Panc1 (cell line): ENCODE measurements at regions of chr7 and their contacts with region 1.

Region 1: GRCh38 chr7:130733931-130734814 is at the start of gene KLF14:
- DNase-seq: no peak
- ATAC-seq: peak; percentile 85
- H3K4me3 ChIP-seq: peak within 1 kb of the TSS; percentile 56 to 63
- H3K27ac ChIP-seq: no peak within 1 kb of the TSS
- H3K4me1 ChIP-seq: peaks cover 3% of the 10 kb centered on the region; the same call in 1 of the 2 replicates
- H3K27me3 ChIP-seq: peaks cover 41% of the 10 kb centered on the region
- CTCF ChIP-seq: peak; percentile 42
- total RNA-seq, gene KLF14: 0.39 TPM

Region 2: DNA sequence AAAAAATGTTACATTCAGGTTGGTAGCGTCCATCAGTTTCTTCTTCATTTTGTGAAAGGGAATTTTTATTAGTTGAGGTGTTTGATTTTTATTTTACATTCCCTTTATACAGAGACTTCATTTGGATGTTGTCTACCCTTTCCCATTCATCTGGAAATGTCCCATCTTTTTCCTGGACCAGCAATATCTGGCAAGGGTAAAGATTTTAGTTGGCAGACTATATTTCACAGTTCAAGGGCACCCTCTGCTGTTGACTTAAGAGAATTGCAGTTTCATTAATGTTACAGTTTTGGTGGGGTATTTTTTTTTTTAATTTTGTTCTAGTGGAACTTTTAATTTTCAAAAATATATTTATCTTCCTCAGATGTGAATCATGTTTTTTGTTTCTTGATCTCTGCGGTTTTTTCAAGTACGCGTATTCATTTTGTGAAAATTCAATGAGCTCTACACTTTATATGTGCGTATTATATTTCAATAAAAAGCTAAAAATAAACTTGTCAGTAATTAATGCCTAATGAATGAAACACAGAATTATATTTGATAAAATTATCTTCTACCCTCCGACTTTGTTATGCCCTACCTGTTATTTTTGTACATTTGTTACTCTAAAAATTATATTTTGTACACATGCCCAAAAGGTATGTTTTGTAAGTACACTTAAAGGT is 97.8 kb after region 1 on chr7:
- CTCF ChIA-PET with region 1: no interaction called
- POLR2A ChIA-PET with region 1: no interaction called
- in situ Hi-C with region 1: no loop called
- intact Hi-C with region 1: loop called (anchors 10 kb)
- DNase-seq: no peak
- ATAC-seq: no peak
- H3K4me3 ChIP-seq: no peak overlapping the region
- H3K27ac ChIP-seq: no peak overlapping the region
- H3K4me1 ChIP-seq: no peaks in the 10 kb centered on the region
- H3K27me3 ChIP-seq: no peaks in the 10 kb centered on the region
- CTCF ChIP-seq: peak; percentile 79; the same call in 1 of the 2 replicates

Region 3: GRCh38 chr7:130921391-130922180 is 187.4 kb after region 1 on chr7:
- CTCF ChIA-PET with region 1: no interaction called
- POLR2A ChIA-PET with region 1: no interaction called
- in situ Hi-C with region 1: no loop called
- intact Hi-C with region 1: no loop called
- DNase-seq: no peak
- ATAC-seq: peak; percentile 33
- H3K4me3 ChIP-seq: peak overlapping the region; percentile 15 to 36
- H3K27ac ChIP-seq: peak overlapping the region; percentile 100
- H3K4me1 ChIP-seq: peaks cover 100% of the 10 kb centered on the region
- H3K27me3 ChIP-seq: no peaks in the 10 kb centered on the region
- CTCF ChIP-seq: no peak